ENCODE measurements at regions of chr14 and their contacts with region 1.

Region 1: GRCh38 chr14:105549481-105549880 is 23.1 kb downstream of the TMEM121 start:
- DNase-seq: no peak
- ATAC-seq: no peak
- H3K4me3 Mint-ChIP-seq: no peak overlapping the region
- H3K27ac Mint-ChIP-seq: no peak overlapping the region
- H3K4me1 Mint-ChIP-seq: no peaks in the 10 kb centered on the region
- H3K27me3 Mint-ChIP-seq: peaks cover 7% of the 10 kb centered on the region

Region 2: GRCh38 chr14:105351920-105352851 is 197.3 kb before region 1 on chr14:
- CTCF ChIA-PET with region 1: no interaction called
- POLR2A ChIA-PET with region 1: no interaction called
- DNase-seq: peak; percentile 94
- ATAC-seq: peak; percentile 97
- H3K4me3 Mint-ChIP-seq: no peak overlapping the region
- H3K27ac Mint-ChIP-seq: peak overlapping the region; percentile 43
- H3K4me1 Mint-ChIP-seq: peaks cover 3% of the 10 kb centered on the region
- H3K27me3 Mint-ChIP-seq: no peaks in the 10 kb centered on the region

Region 3: GRCh38 chr14:105448706-105449111 is 100.8 kb before region 1 on chr14:
- CTCF ChIA-PET with region 1: no interaction called
- POLR2A ChIA-PET with region 1: no interaction called
- DNase-seq: peak; percentile 63
- ATAC-seq: peak; percentile 90
- H3K4me3 Mint-ChIP-seq: no peak overlapping the region
- H3K27ac Mint-ChIP-seq: no peak overlapping the region
- H3K4me1 Mint-ChIP-seq: no peaks in the 10 kb centered on the region
- H3K27me3 Mint-ChIP-seq: no peaks in the 10 kb centered on the region

Region 4: GRCh38 chr14:105537369-105538164 is 11.9 kb before region 1 on chr14:
- CTCF ChIA-PET with region 1: interaction called, 12 read pairs
- POLR2A ChIA-PET with region 1: no interaction called
- DNase-seq: peak; percentile 74
- ATAC-seq: peak; percentile 90
- H3K4me3 Mint-ChIP-seq: no peak overlapping the region
- H3K27ac Mint-ChIP-seq: no peak overlapping the region
- H3K4me1 Mint-ChIP-seq: peaks cover 4% of the 10 kb centered on the region
- H3K27me3 Mint-ChIP-seq: peaks cover 4% of the 10 kb centered on the region

Region 5: GRCh38 chr14:105568859-105569708 is 19.6 kb after region 1 on chr14:
- CTCF ChIA-PET with region 1: no interaction called
- POLR2A ChIA-PET with region 1: no interaction called
- DNase-seq: no peak
- ATAC-seq: no peak
- H3K4me3 Mint-ChIP-seq: no peak overlapping the region
- H3K27ac Mint-ChIP-seq: no peak overlapping the region
- H3K4me1 Mint-ChIP-seq: no peaks in the 10 kb centered on the region
- H3K27me3 Mint-ChIP-seq: no peaks in the 10 kb centered on the region

Measured in activated CD8-positive, alpha-beta T cell treated with anti-CD3 and anti-CD28 coated beads, Interleukin-2, amount 10 ng/mL, durations not matched to agents 7 days and 5 days (primary cell).